SK-N-SH (cell line): ENCODE measurements at regions of chr3 and their contacts with region 1.

Region 1: GRCh38 chr3:155805802-155806618 is at the start of gene C3orf33:
- DNase-seq: peak; percentile 95
- H3K4me3 ChIP-seq: peak within 1 kb of the TSS; percentile 68 to 75
- H3K27ac ChIP-seq: peak within 1 kb of the TSS; percentile 41 to 66; a peak in 3 of 4 replicates
- H3K4me1 ChIP-seq: peaks cover 0 to 5% of the 10 kb centered on the region in 2 experiments; a peak in 1 of 4 replicates
- H3K27me3 ChIP-seq: no peaks in the 10 kb centered on the region
- CTCF ChIP-seq: peak; percentile 87
- EP300 ChIP-seq: no peak
- RAD21 ChIP-seq: peak; percentile 70
- polyA plus RNA-seq, gene C3orf33: 2.9 and 3.3 TPM in 2 replicates

Region 2: DNA sequence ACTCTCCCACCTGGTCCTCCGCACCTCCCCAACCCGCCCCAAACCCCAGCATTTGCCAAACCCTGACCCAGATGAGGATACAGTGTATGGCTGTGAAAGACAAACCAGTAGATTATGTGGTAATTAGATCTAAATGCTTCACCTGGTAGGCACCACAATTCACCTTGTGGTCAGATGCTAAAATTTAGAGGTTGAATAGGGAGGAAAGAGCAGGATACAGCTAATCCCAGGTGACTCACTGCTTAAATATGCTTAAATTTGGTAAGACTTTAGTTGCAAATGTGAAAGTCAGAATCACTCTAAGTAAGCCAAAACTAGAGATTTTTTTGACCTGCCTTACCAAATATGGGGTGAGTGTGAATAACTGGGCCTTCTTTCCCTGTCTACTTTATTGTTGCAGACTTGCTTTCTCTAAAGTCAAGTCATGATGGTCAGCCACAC is 620.4 kb before region 1 on chr3:
- CTCF ChIA-PET with region 1: no interaction called
- POLR2A ChIA-PET with region 1: no interaction called
- DNase-seq: no peak
- H3K4me3 ChIP-seq: no peak overlapping the region
- H3K27ac ChIP-seq: no peak overlapping the region
- H3K4me1 ChIP-seq: no peaks in the 10 kb centered on the region
- H3K27me3 ChIP-seq: no peaks in the 10 kb centered on the region
- CTCF ChIP-seq: no peak
- EP300 ChIP-seq: no peak
- RAD21 ChIP-seq: no peak

Region 3: GRCh38 chr3:155778462-155778861 is 27.5 kb before region 1 on chr3:
- CTCF ChIA-PET with region 1: interaction called, 18 read pairs
- POLR2A ChIA-PET with region 1: interaction called, 6 read pairs
- DNase-seq: no peak
- H3K4me3 ChIP-seq: no peak overlapping the region
- H3K27ac ChIP-seq: no peak overlapping the region
- H3K4me1 ChIP-seq: no peaks in the 10 kb centered on the region
- H3K27me3 ChIP-seq: no peaks in the 10 kb centered on the region
- CTCF ChIP-seq: no peak
- EP300 ChIP-seq: no peak
- RAD21 ChIP-seq: no peak

Region 4: DNA sequence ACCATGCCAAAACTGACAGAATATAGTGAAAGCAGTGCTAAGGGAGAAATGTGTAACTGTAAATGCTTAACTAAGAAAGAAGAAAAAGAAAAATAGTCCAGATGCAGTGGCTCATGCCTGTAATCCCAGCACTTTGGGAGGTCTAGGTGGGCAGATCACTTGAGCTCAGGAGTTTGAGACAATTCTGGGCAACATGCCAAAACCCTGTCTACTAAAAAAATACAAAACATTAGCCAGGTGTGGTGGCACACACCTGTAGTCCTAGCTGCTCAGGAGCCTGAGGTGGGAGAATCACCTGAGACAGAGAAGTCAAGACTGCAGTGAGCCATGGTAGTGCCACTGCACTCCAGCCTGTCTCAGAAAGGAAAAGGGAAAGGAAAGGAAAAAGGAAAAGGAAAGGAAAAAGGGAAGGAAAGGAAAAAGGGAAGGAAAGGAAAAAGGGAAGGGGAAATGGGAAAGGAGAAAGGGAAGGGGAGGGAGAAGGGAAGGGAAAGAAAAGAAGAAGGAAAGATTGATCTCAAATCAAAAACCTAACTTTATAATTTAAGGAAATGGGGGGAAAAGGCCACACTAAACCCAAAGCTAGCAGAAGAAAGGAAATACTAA is 20.2 kb before region 1 on chr3:
- CTCF ChIA-PET with region 1: interaction called, 18 read pairs
- POLR2A ChIA-PET with region 1: interaction called, 6 read pairs
- DNase-seq: no peak
- H3K4me3 ChIP-seq: no peak overlapping the region
- H3K27ac ChIP-seq: no peak overlapping the region
- H3K4me1 ChIP-seq: no peaks in the 10 kb centered on the region
- H3K27me3 ChIP-seq: no peaks in the 10 kb centered on the region
- CTCF ChIP-seq: no peak
- EP300 ChIP-seq: no peak
- RAD21 ChIP-seq: no peak

Region 5: GRCh38 chr3:155791190-155791589 is 14.8 kb before region 1 on chr3:
- CTCF ChIA-PET with region 1: interaction called, 18 read pairs
- POLR2A ChIA-PET with region 1: no interaction called
- DNase-seq: no peak
- H3K4me3 ChIP-seq: no peak overlapping the region
- H3K27ac ChIP-seq: no peak overlapping the region
- H3K4me1 ChIP-seq: no peaks in the 10 kb centered on the region
- H3K27me3 ChIP-seq: no peaks in the 10 kb centered on the region
- CTCF ChIP-seq: no peak
- EP300 ChIP-seq: no peak
- RAD21 ChIP-seq: no peak

Region 6: GRCh38 chr3:155870133-155870944 is 64.3 kb after region 1 on chr3 and contains the start of gene GMPS:
- CTCF ChIA-PET with region 1: interaction called, 49 read pairs
- POLR2A ChIA-PET with region 1: interaction called, 17 read pairs
- DNase-seq: peak; percentile 98
- H3K4me3 ChIP-seq: peak within 1 kb of the TSS; percentile 85 to 96
- H3K27ac ChIP-seq: peak within 1 kb of the TSS; percentile 86 to 92
- H3K4me1 ChIP-seq: peaks cover 8 to 10% of the 10 kb centered on the region in 2 experiments; a peak in 3 of 4 replicates
- H3K27me3 ChIP-seq: no peaks in the 10 kb centered on the region
- CTCF ChIP-seq: 0 out of 2 replicates have a peak, but pooled peaks have one; percentile 38
- EP300 ChIP-seq: no peak
- RAD21 ChIP-seq: peak; percentile 60
- polyA plus RNA-seq, gene GMPS: 13.4 and 14.8 TPM in 2 replicates